Vagina (tissue), 2 donors: ENCODE measurements at regions of chr17 and their contacts with region 1.

Region 1: GRCh38 chr17:38752119-38752929 is at the start of gene PSMB3:
- DNase-seq: peak in 1 of 2 donors; percentile 100
- H3K4me3 ChIP-seq: peak within 1 kb of the TSS; percentile 83 to 91
- H3K27ac ChIP-seq: peak within 1 kb of the TSS; percentile 81
- H3K4me1 ChIP-seq: peaks cover 58% of the 10 kb centered on the region
- H3K27me3 ChIP-seq: no peaks in the 10 kb centered on the region
- CTCF ChIP-seq: peak in 1 of 3 experiments; percentile 9
- POLR2A ChIP-seq: no peak
- total RNA-seq, gene PSMB3: 193 TPM

Region 2: GRCh38 chr17:38729886-38730525 is 22.3 kb before region 1 on chr17 and contains the start of gene CISD3:
- intact Hi-C with region 1: loop called (anchors 2 kb)
- DNase-seq: no peak
- H3K4me3 ChIP-seq: peak within 1 kb of the TSS; percentile 73 to 92
- H3K27ac ChIP-seq: peak within 1 kb of the TSS; percentile 85
- H3K4me1 ChIP-seq: peaks cover 45% of the 10 kb centered on the region
- H3K27me3 ChIP-seq: no peaks in the 10 kb centered on the region
- CTCF ChIP-seq: peak; percentile 68 to 82 (median 71)
- POLR2A ChIP-seq: no peak
- total RNA-seq, gene CISD3: 12.8 TPM

Region 3: DNA sequence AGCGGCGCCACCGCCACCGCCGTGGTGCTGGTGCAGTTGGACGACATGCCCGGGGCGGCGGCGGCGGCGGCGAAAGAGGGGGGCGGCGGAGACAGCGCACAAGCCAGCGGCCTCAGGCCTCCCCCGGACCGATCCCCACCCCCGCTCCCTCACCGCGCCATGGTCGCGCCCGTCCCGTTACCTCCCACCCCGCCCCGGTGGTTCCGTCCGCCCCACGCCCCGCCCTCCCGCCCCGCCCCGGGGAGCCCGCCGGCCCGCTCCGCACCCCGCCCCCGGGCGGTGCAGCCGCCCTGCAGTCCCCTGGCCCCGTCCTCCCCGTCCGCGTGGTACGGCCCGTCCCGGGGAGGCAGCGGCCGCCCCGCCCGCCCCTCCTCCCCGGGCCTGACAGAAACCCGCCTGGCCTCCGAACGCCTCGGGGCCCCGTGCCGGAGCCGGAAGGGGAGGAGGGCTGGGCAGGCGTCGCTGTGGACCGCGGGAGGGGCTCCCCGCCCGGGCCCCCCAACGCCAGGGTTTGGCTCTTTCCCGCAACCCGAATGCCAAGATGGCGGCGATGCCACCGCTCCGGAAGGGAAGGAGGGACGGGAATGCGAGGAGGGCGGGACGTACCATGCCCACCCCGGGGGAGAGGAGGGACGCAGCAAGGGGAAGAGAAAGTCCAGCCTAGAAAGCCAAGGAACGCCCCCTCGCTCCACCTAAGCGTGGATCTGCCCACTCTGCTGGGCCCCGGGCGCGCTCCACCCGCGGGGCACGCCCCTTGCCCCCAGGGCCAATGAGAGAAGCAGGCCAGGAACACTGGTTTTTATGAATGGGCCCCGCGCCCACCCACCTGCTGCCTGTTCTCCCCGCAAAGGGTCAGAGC is 47.3 kb after region 1 on chr17 and contains the start of gene PIP4K2B:
- intact Hi-C with region 1: loop called (anchors 5 kb)
- DNase-seq: peak in 1 of 2 donors; percentile 93
- H3K4me3 ChIP-seq: peak within 1 kb of the TSS; percentile 78 to 98
- H3K27ac ChIP-seq: peak within 1 kb of the TSS; percentile 97
- H3K4me1 ChIP-seq: peaks cover 29% of the 10 kb centered on the region
- H3K27me3 ChIP-seq: no peaks in the 10 kb centered on the region
- CTCF ChIP-seq: no peak
- POLR2A ChIP-seq: no peak
- total RNA-seq, gene PIP4K2B: 68.5 TPM

Region 4: GRCh38 chr17:38809828-38810227 is 57.5 kb after region 1 on chr17:
- intact Hi-C with region 1: no loop called
- DNase-seq: no peak
- H3K4me3 ChIP-seq: no peak overlapping the region
- H3K27ac ChIP-seq: no peak overlapping the region
- H3K4me1 ChIP-seq: no peaks in the 10 kb centered on the region
- H3K27me3 ChIP-seq: no peaks in the 10 kb centered on the region
- CTCF ChIP-seq: no peak
- POLR2A ChIP-seq: no peak

Region 5: GRCh38 chr17:38841141-38841485 is 88.8 kb after region 1 on chr17:
- intact Hi-C with region 1: no loop called
- DNase-seq: no peak
- H3K4me3 ChIP-seq: peak overlapping the region in 1 of 2 donors; percentile 16
- H3K27ac ChIP-seq: no peak overlapping the region
- H3K4me1 ChIP-seq: no peaks in the 10 kb centered on the region
- H3K27me3 ChIP-seq: no peaks in the 10 kb centered on the region
- CTCF ChIP-seq: no peak
- POLR2A ChIP-seq: no peak